IMR-90 (cell line): ENCODE measurements at regions of chr3 and their contacts with region 1.

Region 1: DNA sequence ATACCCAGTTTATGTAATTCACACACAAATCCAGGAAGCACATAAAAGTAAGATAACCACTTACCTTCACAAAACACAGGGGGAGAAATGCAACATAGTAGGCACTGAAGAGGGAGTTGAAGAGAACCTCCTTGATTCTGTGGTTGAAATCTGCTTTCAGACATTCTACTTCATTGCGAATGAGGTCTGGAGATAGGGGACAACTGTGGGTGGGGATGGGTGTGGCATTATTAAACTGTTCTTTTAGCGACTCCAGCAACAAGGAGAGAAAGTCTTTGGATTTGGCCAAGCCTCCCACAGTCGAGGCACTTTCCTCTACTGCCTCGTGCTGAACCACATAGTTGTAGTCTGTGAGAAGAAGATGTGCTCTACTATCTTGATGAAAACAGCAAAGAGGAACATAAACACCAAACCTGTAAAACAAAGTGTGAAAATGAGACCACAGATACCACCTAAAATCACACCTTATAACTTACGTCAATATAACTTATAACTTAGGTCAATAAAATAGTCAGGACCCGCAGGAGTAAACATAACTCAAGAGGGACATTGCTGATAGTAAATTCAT is 25.6 kb downstream of the TMEM39A start:
- DNase-seq: no peak
- ATAC-seq: no peak
- H3K4me3 ChIP-seq: no peak overlapping the region
- H3K27ac ChIP-seq: no peak overlapping the region
- H3K4me1 ChIP-seq: 0 out of 2 replicates have a peak, but pooled peaks cover 2% of the 10 kb centered on the region
- H3K27me3 ChIP-seq: no peaks in the 10 kb centered on the region
- CTCF ChIP-seq: no peak
- POLR2A ChIP-seq: no peak
- RAD21 ChIP-seq: no peak

Region 2: GRCh38 chr3:118909763-118910162 is 528.0 kb before region 1 on chr3:
- CTCF ChIA-PET with region 1: interaction called, 11 read pairs
- POLR2A ChIA-PET with region 1: no interaction called
- dilution Hi-C with region 1: no loop called
- in situ Hi-C with region 1: no loop called
- intact Hi-C with region 1: no loop called
- DNase-seq: no peak
- ATAC-seq: no peak
- H3K4me3 ChIP-seq: no peak overlapping the region
- H3K27ac ChIP-seq: no peak overlapping the region
- H3K4me1 ChIP-seq: no peaks in the 10 kb centered on the region
- H3K27me3 ChIP-seq: no peaks in the 10 kb centered on the region
- CTCF ChIP-seq: no peak
- POLR2A ChIP-seq: no peak
- RAD21 ChIP-seq: no peak